Posterior vena cava (tissue), 2 donors: ENCODE measurements at regions of chr6 and their contacts with region 1.

Region 1: GRCh38 chr6:26401987-26402658 is at the start of gene BTN3A1:
- DNase-seq: peak; percentile 87
- total RNA-seq, gene BTN3A1: 9.1 to 15.6 TPM

Region 2: DNA sequence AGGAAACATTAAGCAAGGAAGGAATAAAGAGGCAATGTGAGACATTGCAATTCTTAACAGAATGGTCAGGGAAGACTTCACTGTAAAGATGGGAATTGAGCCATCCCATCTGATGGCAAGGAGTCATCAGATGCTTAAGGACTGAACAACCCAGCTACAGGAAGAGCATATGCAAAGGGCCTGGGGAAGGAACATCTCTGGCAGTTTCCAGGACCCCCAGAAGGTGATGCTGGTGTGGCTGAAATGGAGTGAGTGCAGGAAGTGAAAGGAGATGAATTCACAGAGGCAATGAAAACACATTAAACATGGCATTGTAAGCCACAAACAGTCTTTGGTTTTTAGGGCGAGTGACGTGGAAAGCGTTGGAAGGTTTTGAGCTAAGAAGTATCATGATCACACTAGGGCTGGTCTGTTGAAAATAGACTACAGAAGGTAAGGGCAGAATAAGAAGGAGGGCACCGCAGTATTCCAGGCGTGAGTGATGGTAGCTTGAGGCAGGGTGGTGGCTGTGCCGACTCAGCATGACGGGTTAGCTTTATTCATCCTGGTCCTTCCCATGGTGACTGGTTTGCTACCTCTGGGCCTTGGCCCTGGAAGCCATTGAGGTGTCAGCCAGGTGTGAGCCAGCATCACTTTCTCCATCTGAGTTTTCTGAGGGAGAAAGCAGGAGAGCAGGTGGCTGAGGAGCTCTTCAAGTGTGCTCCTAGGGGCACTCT is 62.5 kb after region 1 on chr6:
- intact Hi-C with region 1: loop called in 1 of 2 experiments (anchors 10 kb)
- DNase-seq: no peak